ENCODE measurements at regions of chr10 and their contacts with region 1.

Region 1: DNA sequence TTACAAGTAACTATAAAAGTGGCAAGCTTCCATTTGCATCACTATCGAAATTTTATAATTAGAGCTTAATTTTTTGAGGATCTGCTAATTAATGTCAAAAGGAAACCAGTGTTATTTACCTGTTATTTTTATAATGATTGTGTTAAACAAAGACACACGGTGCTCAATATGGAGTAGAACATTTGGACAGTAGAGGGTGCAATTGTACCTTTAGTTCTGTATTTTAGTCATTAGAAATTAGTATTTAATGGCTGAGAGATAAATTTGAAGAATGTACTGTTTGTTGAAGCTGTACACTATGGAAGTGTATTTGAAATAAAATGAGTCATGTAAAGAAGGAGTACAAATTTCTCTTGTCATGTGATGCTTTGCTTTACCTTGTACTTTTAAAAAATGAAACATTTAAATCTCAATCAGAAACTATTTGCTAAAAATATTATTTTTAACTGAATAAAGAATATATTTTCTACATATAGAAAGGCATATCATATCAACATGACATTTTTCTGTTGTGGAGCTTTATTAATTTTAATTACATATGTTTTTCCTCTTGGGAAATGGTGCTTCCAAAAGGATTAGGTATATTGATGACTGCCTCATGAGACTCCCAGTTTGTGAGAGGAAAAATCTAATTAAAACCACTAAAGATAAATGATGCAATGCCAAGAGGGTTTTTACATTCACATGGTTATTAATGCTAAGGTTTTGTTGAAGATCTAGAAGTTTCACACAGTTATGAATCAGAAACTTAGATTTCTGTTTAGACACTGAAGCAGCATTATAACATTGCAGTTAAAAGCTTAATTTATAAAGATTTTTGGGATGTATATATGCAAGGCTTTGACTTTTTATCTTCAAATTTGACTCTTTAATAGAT is 10.4 kb upstream of the PRKG1 start:
- DNase-seq: peak; percentile 23
- H3K4me3 ChIP-seq: no peak overlapping the region
- CTCF ChIP-seq: peak; percentile 45

Region 2: GRCh38 chr10:50990568-50991185 is 73.2 kb before region 1 on chr10:
- CTCF ChIA-PET with region 1: interaction called, 10 read pairs
- POLR2A ChIA-PET with region 1: no interaction called
- DNase-seq: peak; percentile 83
- H3K4me3 ChIP-seq: peak overlapping the region; percentile 88
- CTCF ChIP-seq: no peak

Region 3: GRCh38 chr10:51074238-51075028 is 10.5 kb after region 1 on chr10 and contains the start of gene PRKG1:
- CTCF ChIA-PET with region 1: interaction called, 10 read pairs
- POLR2A ChIA-PET with region 1: no interaction called
- DNase-seq: no peak
- H3K4me3 ChIP-seq: peak within 1 kb of the TSS; percentile 80
- CTCF ChIP-seq: no peak

Region 4: DNA sequence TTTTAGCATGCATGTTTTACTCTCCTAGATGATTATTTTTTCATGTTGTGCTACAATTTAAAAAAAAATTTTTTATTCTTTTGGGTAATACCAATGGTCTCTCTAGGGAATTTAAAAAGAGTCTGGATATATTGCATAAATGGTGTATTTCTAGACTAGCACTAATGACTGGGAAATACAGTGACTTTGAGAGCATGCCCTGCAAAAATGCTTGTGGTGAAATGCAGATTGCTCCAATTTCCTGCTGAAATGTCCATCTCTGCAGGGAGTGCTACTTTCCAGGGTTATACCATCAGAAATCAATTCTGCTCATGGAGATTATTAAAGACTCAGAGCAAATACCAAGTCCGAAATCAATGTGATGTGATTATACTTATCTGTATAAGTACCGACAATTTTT is 196.5 kb after region 1 on chr10:
- CTCF ChIA-PET with region 1: no interaction called
- POLR2A ChIA-PET with region 1: no interaction called
- DNase-seq: no peak
- H3K4me3 ChIP-seq: no peak overlapping the region
- CTCF ChIP-seq: no peak

Region 5: DNA sequence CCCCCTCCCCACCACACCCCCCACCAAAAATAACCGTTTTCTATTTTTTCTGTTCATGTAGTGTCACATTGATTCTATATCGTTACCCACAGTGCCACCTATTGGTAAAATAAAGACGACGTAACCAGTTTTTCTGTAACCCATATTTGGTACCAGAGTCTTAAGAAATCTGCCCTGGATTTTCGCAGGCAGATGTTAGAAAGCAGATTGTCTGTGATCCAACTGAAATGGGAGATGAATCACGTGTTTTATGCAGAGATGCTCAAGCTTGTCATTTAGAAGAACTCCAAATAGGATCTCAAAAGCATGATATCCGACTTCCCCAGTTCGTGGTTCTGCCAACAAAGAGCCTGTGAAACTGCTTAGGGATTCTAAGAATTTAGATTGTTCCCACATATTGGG is 896.6 kb after region 1 on chr10:
- CTCF ChIA-PET with region 1: interaction called, 17 read pairs
- POLR2A ChIA-PET with region 1: no interaction called
- DNase-seq: no peak
- H3K4me3 ChIP-seq: no peak overlapping the region
- CTCF ChIP-seq: peak; percentile 36

Region 6: GRCh38 chr10:52215745-52216361 is 1152.0 kb after region 1 on chr10:
- CTCF ChIA-PET with region 1: interaction called, 26 read pairs
- POLR2A ChIA-PET with region 1: no interaction called
- DNase-seq: peak; percentile 37
- H3K4me3 ChIP-seq: no peak overlapping the region
- CTCF ChIP-seq: peak; percentile 45